ENCODE measurements at regions of chr16 and their contacts with region 1.

Region 1: GRCh38 chr16:30429678-30430427 is at the start of gene DCTPP1:
- DNase-seq: peak; percentile 98
- H3K27ac ChIP-seq: peak within 1 kb of the TSS; percentile 71
- CTCF ChIP-seq: peak; percentile 93

Region 2: GRCh38 chr16:30368122-30368791 is 61.6 kb before region 1 on chr16:
- CTCF ChIA-PET with region 1: no interaction called
- POLR2A ChIA-PET with region 1: no interaction called
- DNase-seq: peak; percentile 48
- H3K27ac ChIP-seq: peak overlapping the region; percentile 88
- CTCF ChIP-seq: no peak

Region 3: DNA sequence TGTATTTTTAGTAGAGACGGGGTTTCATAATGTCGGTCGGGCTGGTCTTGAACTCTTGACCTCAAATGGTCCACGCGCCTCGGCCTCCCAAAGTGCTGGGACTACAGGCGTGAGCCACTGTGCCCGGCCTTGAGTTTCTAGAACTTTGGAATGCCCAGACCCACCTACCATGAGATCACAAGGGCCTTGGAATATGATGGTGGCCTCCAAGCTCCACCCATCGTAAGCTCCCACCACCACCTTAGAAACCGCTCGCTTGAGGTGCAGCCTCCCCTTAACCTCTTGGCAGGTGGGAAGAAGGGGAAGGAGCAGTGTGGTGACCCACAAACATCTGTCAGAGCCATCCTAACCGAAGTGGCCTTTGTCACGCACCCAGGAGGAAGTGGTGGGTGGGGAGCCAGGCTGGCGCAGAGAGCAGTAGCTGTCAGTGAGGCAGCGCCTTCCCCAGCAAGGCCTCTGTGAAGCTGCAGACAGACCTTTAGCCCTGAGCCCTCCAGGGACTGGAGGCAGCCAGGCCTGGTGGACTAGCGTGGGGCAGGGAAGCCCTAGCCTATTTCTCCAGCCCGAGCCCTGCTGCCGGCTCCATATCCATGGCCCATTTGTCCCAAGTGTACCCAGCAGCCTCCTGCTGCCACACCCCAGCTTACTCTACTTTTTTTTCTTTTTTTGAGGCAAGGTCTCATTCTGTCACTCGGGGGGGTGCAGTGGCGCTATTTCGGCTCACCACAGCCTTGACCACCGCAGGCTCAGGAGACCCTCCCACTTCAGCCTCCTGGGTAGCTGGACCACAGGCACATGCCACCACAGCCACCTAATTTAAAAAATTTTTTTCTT is 28.9 kb after region 1 on chr16:
- CTCF ChIA-PET with region 1: no interaction called
- POLR2A ChIA-PET with region 1: no interaction called
- DNase-seq: no peak
- H3K27ac ChIP-seq: no peak overlapping the region
- CTCF ChIP-seq: no peak

Region 4: DNA sequence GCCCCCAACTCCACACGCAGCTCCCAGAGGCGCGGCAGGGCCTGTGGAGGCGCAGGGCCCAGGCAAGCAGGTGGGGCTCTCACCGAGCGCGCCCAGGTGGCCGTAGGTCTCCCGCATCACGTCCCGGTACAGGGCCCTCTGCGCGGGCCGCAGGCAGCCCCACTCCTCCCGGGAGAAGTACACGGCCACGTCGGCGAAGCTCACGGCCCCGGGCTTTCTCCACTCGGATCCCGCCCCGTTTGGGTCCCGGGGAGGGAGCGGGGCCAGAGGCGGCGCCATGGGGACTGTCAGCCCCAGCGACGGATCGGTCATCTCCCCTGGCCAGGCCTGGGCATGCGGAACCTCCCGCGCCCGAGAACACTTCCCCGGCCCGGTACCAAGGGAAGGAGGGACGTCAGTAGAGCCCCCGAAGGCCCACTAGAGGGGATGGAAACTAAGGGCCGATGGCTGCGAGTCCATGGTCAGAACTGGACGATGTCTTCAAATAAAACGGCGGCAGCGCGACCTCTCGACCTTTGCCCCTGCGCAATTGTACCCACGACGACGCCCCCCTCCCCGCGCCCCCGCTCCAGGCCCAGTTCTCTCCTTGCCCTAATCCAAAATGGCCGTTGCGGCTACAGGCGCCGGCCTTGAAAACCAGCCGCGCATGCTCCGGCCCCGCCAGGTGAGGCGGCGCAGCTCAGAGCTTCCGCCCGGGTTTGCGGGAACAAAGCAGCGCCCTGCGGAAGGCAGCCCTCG is 104.7 kb after region 1 on chr16 and contains the start of gene ZNF747:
- CTCF ChIA-PET with region 1: interaction called, 30 read pairs
- POLR2A ChIA-PET with region 1: interaction called, 7 read pairs
- DNase-seq: peak; percentile 83
- H3K27ac ChIP-seq: peak within 1 kb of the TSS; percentile 89
- CTCF ChIP-seq: no peak

Region 5: GRCh38 chr16:30557957-30558788 is 128.3 kb after region 1 on chr16 and contains the start of gene ZNF764:
- CTCF ChIA-PET with region 1: interaction called, 4 read pairs
- POLR2A ChIA-PET with region 1: interaction called, 10 read pairs
- DNase-seq: peak; percentile 95
- H3K27ac ChIP-seq: peak within 1 kb of the TSS; percentile 90
- CTCF ChIP-seq: no peak